Activated CD8-positive, alpha-beta T cell treated with anti-CD3 and anti-CD28 coated beads, Interleukin-2, amount 10 ng/mL, durations not matched to agents 7 days and 5 days (primary cell): ENCODE measurements at regions of chr7 and their contacts with region 1.

Region 1: DNA sequence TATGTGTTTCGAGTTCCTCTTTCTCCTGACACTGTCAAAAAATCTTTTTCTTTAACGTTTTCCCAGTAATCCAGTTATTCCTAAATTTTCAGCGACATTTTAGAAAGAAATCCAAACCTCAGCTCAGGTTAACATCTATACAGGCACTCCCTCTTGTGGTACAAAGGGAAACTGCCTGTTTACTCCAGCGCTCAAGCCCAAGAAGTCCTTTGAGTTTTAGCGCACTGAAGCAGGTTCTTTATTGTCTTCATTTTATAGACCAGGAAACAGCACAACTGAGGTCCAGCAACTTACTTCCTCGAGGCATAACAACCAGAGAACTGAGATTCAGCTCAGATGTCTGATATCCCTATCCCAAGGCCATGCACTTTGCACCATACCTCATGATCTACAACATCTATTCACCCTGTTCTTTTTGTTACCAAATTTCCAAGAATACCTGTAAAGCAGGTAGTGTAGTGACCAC is 287.2 kb upstream of the MKLN1 start:
- DNase-seq: peak; percentile 73
- ATAC-seq: peak; percentile 64
- H3K4me3 Mint-ChIP-seq: no peak overlapping the region
- H3K27ac Mint-ChIP-seq: no peak overlapping the region
- H3K4me1 Mint-ChIP-seq: peaks cover 27% of the 10 kb centered on the region
- H3K27me3 Mint-ChIP-seq: no peaks in the 10 kb centered on the region

Region 2: DNA sequence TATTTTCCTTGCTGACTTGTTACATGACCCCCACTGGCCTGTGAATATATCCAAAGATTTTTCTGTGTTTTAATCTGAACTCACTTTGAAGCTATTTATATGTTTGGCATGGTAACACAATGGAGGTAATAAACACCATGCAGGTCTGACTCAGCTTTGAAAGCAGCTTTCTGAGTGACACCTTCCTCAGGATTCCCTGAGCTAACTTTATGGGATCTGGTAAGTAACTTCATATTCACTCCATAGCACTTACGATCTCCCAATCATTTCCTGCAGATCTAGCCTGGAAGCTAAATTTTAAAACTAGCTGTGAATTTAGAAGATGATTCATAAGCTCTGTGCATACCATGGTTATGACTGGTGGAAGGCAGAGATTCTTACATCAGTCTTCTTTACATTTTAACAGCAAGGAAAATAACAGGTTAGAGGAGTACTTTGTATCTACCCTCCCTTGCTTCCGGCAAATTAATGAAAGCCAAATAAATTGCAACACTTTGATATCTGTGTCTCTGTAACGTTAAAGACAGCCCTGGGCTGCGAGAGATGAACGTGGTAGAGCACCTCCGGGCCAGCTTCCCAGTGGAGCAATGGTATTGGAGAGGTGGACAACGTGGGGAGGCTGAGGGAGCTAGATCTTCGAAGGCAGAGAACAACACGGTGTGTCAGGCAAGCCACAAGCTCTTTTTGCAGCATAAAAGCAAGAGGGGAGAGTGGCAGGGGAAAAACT is 136.3 kb before region 1 on chr7:
- CTCF ChIA-PET with region 1: interaction called, 127 read pairs
- POLR2A ChIA-PET with region 1: no interaction called
- DNase-seq: no peak
- ATAC-seq: no peak
- H3K4me3 Mint-ChIP-seq: no peak overlapping the region
- H3K27ac Mint-ChIP-seq: peak overlapping the region; percentile 69
- H3K4me1 Mint-ChIP-seq: peaks cover 73% of the 10 kb centered on the region
- H3K27me3 Mint-ChIP-seq: no peaks in the 10 kb centered on the region

Region 3: DNA sequence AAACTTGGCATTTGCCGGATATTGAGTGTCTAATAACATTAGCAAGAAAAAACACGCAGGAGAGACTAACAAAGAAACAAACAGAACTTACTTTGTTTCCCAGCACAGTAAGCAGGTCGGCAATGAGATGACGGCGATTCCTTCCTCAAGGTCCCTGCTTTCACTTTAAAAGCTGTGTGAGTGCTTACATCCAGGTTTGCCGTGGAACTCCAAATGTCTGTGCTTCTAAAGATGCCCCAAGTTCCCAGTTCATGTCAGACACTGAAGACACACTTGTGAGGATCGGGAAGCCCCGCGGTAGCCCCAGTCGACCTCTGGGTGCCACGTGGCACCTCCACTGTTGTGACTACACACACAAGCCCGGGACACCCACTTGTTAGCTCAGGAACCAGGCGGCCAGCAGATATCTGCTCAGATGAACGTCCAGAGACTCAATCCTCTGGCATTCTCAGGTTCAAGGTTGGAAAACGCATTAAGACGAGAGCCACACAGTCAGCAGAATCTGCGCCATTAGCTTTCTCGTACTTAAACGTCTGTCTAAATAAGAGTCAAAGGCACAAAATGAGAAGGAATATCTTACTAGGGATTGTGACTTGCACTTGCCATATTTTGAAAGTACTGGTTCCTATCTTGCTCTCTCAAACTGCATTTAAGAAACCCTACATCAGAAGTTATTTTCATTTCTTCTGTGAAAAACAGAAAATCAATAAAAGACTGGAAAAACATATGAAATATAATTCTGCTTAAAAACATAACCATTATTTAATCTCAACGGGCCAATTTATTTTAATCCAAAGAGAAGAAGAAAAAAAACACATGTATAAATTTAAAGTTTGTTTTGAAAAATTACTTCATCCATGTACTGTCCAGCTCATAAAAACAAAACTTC is 98.9 kb before region 1 on chr7:
- CTCF ChIA-PET with region 1: interaction called, 14 read pairs
- POLR2A ChIA-PET with region 1: no interaction called
- DNase-seq: no peak
- ATAC-seq: peak; percentile 18
- H3K4me3 Mint-ChIP-seq: peak overlapping the region; percentile 72
- H3K27ac Mint-ChIP-seq: peak overlapping the region; percentile 75
- H3K4me1 Mint-ChIP-seq: peaks cover 83% of the 10 kb centered on the region
- H3K27me3 Mint-ChIP-seq: no peaks in the 10 kb centered on the region

Region 4: DNA sequence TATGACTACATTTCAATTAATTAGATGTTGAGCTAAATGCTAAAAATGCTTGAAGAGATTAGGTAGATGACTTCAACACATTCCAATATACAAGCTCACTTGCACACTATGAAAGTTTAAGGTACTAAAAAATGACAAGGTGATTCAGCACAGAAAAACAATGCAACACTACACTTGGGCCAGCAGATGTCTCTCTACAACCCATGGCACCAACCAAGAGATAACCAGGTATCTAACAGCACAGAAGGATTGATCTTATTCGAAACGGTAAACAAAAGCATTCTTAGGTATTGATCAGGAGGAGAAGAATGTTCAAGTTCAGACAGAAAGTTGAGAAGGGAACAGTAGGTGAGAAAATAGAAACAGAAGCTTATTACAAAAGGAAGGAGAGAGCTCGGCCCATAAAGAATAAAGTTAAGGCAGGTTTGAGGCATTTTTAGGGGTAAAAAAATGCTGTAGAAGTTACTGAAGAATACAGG is 58.3 kb before region 1 on chr7:
- CTCF ChIA-PET with region 1: interaction called, 132 read pairs
- POLR2A ChIA-PET with region 1: no interaction called
- DNase-seq: peak; percentile 50
- ATAC-seq: peak; percentile 86
- H3K4me3 Mint-ChIP-seq: no peak overlapping the region
- H3K27ac Mint-ChIP-seq: no peak overlapping the region
- H3K4me1 Mint-ChIP-seq: peaks cover 29% of the 10 kb centered on the region
- H3K27me3 Mint-ChIP-seq: no peaks in the 10 kb centered on the region

Region 5: DNA sequence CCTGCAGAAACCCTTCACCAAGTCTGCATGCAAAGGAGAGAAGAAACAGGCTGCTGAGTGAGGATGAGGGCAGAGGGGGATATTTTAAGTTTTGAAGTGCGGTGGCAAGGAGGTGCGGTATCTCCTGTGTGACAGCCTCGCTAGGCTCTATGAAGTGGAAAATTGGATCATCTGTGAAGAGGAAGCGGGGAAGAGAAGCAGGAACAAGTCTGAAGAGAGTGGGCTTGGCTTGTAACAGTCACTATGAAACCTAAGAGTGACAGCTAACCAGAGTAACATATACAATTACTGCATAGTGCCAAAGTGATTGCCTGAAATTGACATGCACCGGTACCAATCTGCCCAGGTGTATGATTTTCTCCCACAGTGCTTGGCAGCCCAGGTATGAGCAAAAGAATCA is 19.0 kb before region 1 on chr7:
- CTCF ChIA-PET with region 1: interaction called, 26 read pairs
- POLR2A ChIA-PET with region 1: no interaction called
- DNase-seq: no peak
- ATAC-seq: peak; percentile 46
- H3K4me3 Mint-ChIP-seq: peak overlapping the region; percentile 1
- H3K27ac Mint-ChIP-seq: peak overlapping the region; percentile 66
- H3K4me1 Mint-ChIP-seq: peaks cover 30% of the 10 kb centered on the region
- H3K27me3 Mint-ChIP-seq: no peaks in the 10 kb centered on the region

Region 6: GRCh38 chr7:131068604-131069021 is 28.1 kb after region 1 on chr7:
- CTCF ChIA-PET with region 1: interaction called, 11 read pairs
- POLR2A ChIA-PET with region 1: no interaction called
- DNase-seq: no peak
- ATAC-seq: no peak
- H3K4me3 Mint-ChIP-seq: no peak overlapping the region
- H3K27ac Mint-ChIP-seq: no peak overlapping the region
- H3K4me1 Mint-ChIP-seq: peaks cover 20% of the 10 kb centered on the region
- H3K27me3 Mint-ChIP-seq: no peaks in the 10 kb centered on the region